ENCODE measurements at regions of chr9 and their contacts with region 1.

Region 1: GRCh38 chr9:21789541-21790037 is 12.8 kb upstream of the MTAP start:
- DNase-seq: no peak
- H3K4me3 ChIP-seq: peak overlapping the region in 3 of 4 donors; percentile 22 to 56 (median 27)
- H3K27ac ChIP-seq: no peak overlapping the region
- H3K4me1 ChIP-seq: peaks cover 0 to 9% (median 0%) of the 10 kb centered on the region in 3 donors
- H3K27me3 ChIP-seq: peaks cover 0 to 28% (median 0%) of the 10 kb centered on the region in 4 donors
- CTCF ChIP-seq: peak; percentile 79 to 98 (median 90)
- POLR2A ChIP-seq: no peak

Region 2: DNA sequence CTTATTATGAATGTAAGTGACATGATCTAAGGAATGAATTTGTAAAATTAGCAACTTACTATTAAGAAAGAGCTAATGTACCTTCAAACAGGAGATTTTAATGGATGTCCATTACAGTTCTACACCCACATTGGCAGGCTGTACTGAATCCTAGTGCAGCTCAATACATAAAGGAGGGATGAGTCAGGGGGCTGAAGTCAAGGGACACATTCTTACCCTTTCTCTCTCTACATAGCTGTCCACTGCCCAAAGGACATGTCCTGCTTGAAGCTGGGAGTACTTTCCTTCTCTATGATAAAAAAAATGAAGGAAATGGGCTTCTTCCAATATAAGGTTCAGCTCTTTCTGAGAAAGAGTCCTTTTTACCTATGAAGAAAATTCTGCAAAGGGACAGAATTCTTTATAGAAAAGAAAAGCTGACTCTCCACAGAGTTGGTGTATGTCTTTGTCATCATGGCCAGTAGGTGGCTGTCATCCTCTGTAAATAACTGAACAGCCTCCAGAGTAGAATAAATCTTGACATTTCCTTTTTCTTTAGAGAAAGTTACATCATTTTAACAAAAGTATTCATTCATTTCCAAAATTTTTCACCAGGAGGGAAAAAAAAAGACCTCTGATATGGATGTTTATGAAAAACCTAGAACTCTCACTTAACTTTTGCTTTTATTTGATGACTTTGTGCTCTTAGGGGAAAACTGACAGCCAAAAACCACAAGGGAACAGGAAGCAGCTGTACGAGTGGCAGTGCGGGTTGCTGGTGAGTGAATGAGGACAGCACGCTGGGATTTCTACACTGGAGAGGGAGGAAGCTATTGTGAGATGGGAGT is 536.7 kb before region 1 on chr9:
- intact Hi-C with region 1: loop called (anchors 10 kb)
- DNase-seq: no peak
- H3K4me3 ChIP-seq: no peak overlapping the region
- H3K27ac ChIP-seq: no peak overlapping the region
- H3K4me1 ChIP-seq: peaks cover 0 to 10% (median 4%) of the 10 kb centered on the region in 3 donors
- H3K27me3 ChIP-seq: peaks cover 0 to 19% (median 1%) of the 10 kb centered on the region in 4 donors
- CTCF ChIP-seq: peak; percentile 25 to 70 (median 49)
- POLR2A ChIP-seq: no peak

Region 3: GRCh38 chr9:21326526-21327139 is 463.0 kb before region 1 on chr9:
- intact Hi-C with region 1: loop called (anchors 10 kb)
- DNase-seq: no peak
- H3K4me3 ChIP-seq: no peak overlapping the region
- H3K27ac ChIP-seq: no peak overlapping the region
- H3K4me1 ChIP-seq: peaks cover 4 to 50% (median 14%) of the 10 kb centered on the region in 3 donors
- H3K27me3 ChIP-seq: no peaks in the 10 kb centered on the region
- CTCF ChIP-seq: peak; percentile 33 to 71 (median 59)
- POLR2A ChIP-seq: no peak

Region 4: GRCh38 chr9:21465859-21466518 is 323.6 kb before region 1 on chr9:
- intact Hi-C with region 1: loop called (anchors 10 kb)
- DNase-seq: no peak
- H3K4me3 ChIP-seq: no peak overlapping the region
- H3K27ac ChIP-seq: no peak overlapping the region
- H3K4me1 ChIP-seq: no peaks in the 10 kb centered on the region
- H3K27me3 ChIP-seq: peaks cover 0 to 3% (median 0%) of the 10 kb centered on the region in 4 donors
- CTCF ChIP-seq: peak; percentile 31 to 76 (median 56)
- POLR2A ChIP-seq: no peak

Region 5: DNA sequence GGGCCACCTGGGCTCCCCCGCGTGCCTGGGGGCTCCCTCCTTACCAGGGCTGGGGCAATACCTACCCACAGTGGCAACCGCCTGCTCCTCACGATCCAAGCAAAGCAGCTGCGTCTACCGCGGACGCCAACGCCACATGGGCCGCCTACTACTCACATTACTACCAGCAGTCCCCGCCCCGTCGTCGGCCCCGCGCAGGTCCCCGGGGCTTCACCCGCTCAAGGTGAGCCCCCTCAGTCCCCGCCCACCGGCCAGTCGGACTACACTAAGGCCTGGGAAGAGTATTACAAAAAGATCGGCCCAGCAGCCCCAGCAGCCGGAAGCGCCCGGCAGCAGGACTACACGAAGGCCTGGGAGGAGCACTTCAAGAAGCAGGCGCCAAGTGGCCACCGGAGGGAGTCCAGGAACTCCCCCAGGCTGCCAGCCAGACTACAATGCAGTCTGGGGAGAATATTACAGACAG is 93.1 kb before region 1 on chr9:
- intact Hi-C with region 1: no loop called
- DNase-seq: no peak
- H3K4me3 ChIP-seq: no peak overlapping the region
- H3K27ac ChIP-seq: no peak overlapping the region
- H3K4me1 ChIP-seq: no peaks in the 10 kb centered on the region
- H3K27me3 ChIP-seq: no peaks in the 10 kb centered on the region
- CTCF ChIP-seq: no peak
- POLR2A ChIP-seq: no peak

Region 6: DNA sequence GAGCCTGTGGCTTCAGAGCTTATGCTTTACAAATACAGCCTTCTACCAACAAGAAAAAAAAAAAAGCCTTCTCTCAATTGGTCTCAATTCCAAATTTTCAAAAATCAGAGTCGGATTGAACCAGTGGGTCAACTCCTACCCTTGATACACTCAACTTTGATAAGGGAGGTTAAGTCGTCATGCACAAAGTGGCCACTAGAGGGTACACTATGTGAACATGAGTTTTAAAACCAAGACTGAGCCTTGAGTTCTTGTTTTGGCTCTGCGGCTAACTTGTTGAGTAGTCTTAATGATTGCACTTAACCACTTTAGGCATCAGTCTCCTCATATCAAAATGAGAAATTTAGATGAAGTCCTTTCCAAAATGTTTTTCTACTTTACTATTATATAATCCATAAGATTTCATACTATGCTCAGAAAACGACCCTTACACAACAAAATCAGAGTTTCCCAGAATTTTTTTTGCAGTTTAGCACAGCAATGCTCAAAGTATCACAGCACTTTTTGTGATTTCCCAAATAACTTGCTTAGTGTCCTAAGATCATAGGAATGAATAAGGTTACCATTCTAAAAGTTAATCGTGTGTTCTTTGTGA is 80.0 kb before region 1 on chr9:
- intact Hi-C with region 1: no loop called
- DNase-seq: no peak
- H3K4me3 ChIP-seq: no peak overlapping the region
- H3K27ac ChIP-seq: no peak overlapping the region
- H3K4me1 ChIP-seq: peaks cover 0 to 53% (median 7%) of the 10 kb centered on the region in 3 donors
- H3K27me3 ChIP-seq: no peaks in the 10 kb centered on the region
- CTCF ChIP-seq: peak; percentile 51 to 82 (median 74)
- POLR2A ChIP-seq: no peak

Region 7: GRCh38 chr9:21840647-21841046 is 51.1 kb after region 1 on chr9:
- intact Hi-C with region 1: no loop called
- DNase-seq: no peak
- H3K4me3 ChIP-seq: no peak overlapping the region
- H3K27ac ChIP-seq: no peak overlapping the region
- H3K4me1 ChIP-seq: peaks cover 8 to 23% (median 9%) of the 10 kb centered on the region in 3 donors
- H3K27me3 ChIP-seq: no peaks in the 10 kb centered on the region
- CTCF ChIP-seq: no peak
- POLR2A ChIP-seq: no peak

Measured in esophagus squamous epithelium (tissue), 5 donors.